Activated CD4-positive, alpha-beta memory T cell treated with anti-CD3 and anti-CD28 coated beads for 36 hours (primary cell): ENCODE measurements at regions of chr10 and their contacts with region 1.

Region 1: DNA sequence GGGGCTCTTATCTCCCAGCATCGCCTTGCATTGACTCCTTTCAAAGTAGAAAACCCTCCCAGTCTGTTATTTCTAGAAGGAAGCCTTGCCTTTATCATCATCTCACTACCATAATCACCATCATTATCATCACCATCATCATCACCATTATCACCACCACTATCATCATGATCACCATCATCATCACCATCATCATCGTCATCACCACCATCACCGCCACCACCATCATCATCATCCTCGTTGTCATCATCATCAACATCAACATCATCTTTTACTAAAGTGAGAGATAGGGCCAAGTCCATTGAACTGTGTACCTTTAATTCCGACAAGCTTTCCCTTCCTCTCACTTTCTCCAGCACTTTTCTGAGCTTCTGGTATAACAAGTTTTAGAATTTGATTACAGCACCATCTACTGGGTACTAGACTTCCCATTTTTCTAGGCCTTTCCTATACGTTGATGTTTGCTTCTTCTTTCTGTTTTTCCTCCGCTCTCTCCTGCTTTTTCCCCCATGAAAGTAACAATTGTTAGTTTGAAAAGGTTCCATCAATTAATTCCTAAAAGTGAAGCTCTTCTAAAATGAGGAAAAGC is 226.4 kb downstream of the BUB3 start:
- DNase-seq: no peak
- H3K4me3 Mint-ChIP-seq: no peak overlapping the region
- H3K27ac Mint-ChIP-seq: no peak overlapping the region
- H3K4me1 Mint-ChIP-seq: no peaks in the 10 kb centered on the region
- H3K27me3 Mint-ChIP-seq: peaks cover 3% of the 10 kb centered on the region

Region 2: DNA sequence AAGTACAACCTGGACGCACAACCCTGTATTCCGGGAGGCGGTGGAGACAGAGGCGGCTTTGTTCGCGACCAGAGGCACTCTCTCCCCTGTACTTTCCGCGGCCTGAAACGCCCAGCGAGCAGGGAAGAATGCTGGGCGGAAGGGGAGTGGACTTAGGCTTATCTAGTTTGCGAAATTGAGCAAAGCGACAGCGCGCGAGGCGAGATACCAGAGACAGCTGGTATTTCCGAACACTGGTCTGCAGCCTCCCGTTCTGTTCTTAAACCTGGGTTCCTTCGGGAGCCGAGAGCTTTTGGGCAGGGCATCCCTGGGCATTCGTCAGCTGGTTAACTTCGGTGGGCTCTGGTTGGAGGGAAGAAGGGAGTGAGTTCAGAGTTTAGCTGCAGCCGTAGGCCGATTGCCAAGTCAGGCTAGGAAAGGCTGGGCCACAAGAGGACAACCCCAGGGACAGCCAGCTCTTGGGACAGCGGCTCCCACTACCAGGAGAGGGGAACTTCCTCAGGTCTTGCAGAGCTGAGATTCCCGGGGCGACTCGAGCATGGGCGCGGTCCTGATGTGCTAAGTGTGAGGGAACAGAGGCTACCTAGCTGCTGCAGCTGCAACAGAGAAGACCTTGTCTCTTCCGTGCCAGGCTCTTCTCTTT is 240.9 kb before region 1 on chr10:
- CTCF ChIA-PET with region 1: interaction called, 14 read pairs
- POLR2A ChIA-PET with region 1: no interaction called
- intact Hi-C with region 1: loop called (anchors 2 kb)
- DNase-seq: no peak
- H3K4me3 Mint-ChIP-seq: peak overlapping the region; percentile 20
- H3K27ac Mint-ChIP-seq: no peak overlapping the region
- H3K4me1 Mint-ChIP-seq: peaks cover 36% of the 10 kb centered on the region
- H3K27me3 Mint-ChIP-seq: peaks cover 75% of the 10 kb centered on the region

Region 3: DNA sequence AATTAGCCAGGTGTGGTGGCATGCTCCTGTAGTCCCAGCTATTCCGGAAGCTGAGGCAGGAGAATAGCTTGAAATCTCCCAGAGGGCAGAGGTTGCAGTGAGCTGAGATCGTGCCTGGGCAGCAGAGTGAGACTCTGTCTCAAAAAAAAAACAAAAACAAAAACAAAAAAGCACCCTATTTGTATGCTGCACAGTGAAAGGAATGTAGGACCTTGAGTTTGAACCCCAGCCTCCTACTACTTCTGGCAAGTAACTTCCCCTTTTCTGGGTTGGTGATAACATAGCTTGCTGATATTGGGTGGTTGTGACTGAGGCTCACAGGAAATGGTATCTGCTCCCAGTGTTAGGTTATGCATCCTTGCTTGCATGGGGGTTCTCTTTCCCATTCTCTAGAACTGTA is 21.1 kb before region 1 on chr10:
- CTCF ChIA-PET with region 1: no interaction called
- POLR2A ChIA-PET with region 1: no interaction called
- intact Hi-C with region 1: no loop called
- DNase-seq: no peak
- H3K4me3 Mint-ChIP-seq: no peak overlapping the region
- H3K27ac Mint-ChIP-seq: no peak overlapping the region
- H3K4me1 Mint-ChIP-seq: no peaks in the 10 kb centered on the region
- H3K27me3 Mint-ChIP-seq: no peaks in the 10 kb centered on the region

Region 4: DNA sequence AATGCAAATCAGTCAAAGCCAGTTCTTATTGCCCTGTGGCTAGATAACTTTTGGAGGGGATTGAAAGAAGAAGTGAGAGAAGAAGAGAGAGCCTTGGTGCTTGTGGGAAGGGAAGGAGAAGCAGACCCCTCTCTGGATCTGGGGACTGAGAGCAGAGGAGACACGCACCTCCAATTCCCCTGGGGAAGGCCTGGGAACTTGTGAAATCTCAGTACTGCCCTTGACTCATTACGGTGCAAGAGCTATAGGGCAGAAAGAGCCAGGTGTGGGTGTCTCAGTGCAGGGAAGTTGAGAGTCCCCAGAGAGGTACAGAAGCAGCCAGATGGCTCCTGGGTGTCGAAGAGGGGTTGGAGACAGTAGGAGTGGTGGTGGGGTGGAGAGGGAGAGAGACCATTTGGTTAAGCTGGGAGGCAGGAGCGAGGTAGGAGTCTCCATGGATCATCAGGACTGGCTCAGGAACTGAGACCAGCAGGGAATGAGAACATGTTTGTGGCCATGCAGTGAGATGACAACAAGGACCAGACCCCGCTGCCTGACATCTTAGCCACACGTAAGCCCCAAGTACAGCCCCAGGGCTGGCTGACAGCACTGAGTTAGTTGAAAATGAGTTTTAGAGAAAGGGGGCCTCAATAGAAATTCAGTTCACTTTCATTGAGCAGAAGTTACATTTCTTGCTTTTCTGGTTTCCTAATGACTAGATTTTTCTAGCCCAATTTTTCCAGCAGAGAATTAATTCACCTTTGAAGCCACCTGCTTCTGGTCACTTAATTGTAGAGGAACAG is 11.8 kb after region 1 on chr10:
- CTCF ChIA-PET with region 1: no interaction called
- POLR2A ChIA-PET with region 1: no interaction called
- intact Hi-C with region 1: no loop called
- DNase-seq: no peak
- H3K4me3 Mint-ChIP-seq: no peak overlapping the region
- H3K27ac Mint-ChIP-seq: no peak overlapping the region
- H3K4me1 Mint-ChIP-seq: no peaks in the 10 kb centered on the region
- H3K27me3 Mint-ChIP-seq: no peaks in the 10 kb centered on the region

Region 5: DNA sequence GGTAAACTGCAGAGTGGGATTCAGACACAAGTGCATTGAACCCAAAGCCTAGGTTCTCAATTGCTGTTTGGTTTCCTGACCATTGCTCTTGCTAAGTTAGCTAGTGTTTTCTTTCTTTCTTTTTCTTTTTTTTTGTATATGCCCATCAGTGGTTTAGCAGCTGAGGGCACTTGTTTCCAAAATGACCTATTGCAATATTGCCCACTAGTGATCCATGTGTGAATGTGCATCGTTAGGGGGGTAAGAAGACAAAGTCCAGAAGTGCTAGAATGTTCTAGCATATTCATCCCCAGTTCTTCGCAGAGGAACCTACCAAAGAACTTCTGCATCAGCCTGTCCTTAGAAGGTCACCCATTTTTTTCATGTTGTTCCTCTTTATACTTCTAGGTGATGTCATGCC is 32.8 kb after region 1 on chr10:
- CTCF ChIA-PET with region 1: no interaction called
- POLR2A ChIA-PET with region 1: no interaction called
- intact Hi-C with region 1: no loop called
- DNase-seq: no peak
- H3K4me3 Mint-ChIP-seq: no peak overlapping the region
- H3K27ac Mint-ChIP-seq: no peak overlapping the region
- H3K4me1 Mint-ChIP-seq: no peaks in the 10 kb centered on the region
- H3K27me3 Mint-ChIP-seq: peaks cover 3% of the 10 kb centered on the region

Region 6: DNA sequence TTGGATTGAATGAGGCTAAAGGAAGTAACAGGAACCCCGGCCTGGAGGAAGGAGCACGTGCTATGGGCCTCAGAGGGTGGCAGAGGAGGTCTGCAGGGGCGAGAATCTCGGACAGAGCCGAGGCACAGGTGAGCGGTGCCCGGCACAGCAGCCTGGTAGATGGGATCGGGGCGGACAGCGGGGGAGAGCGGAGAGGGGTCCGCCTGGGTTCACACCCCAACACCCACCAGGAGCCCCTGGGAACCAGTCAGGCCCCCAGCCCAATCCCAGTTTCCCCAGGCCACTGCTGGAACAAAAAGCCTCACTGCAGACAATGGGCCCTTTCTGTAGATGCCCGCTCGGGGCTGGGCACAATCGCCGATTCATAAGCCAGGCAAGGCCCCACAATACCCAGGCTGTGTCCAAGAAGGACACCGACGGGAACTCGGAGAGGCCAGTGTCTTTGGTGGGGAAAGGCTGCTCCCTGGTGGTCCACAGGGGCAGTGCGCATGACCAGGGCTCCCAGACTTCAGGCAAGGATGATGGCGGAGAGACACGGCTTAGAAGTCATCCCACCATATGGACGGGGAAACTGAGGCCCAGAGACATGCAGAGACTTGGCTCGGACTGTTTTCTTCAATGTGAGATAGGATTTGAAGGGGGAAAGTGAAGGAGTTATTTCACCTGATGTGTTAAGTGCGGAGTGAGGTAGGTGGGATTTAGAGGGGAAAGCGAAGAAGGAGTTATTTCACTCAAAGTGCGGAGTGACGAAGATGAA is 178.7 kb after region 1 on chr10:
- CTCF ChIA-PET with region 1: no interaction called
- POLR2A ChIA-PET with region 1: no interaction called
- intact Hi-C with region 1: loop called (anchors 2 kb)
- DNase-seq: peak; percentile 73
- H3K4me3 Mint-ChIP-seq: no peak overlapping the region
- H3K27ac Mint-ChIP-seq: no peak overlapping the region
- H3K4me1 Mint-ChIP-seq: no peaks in the 10 kb centered on the region
- H3K27me3 Mint-ChIP-seq: peaks cover 5% of the 10 kb centered on the region